PC-3 (cell line): ENCODE measurements at regions of chr19 and their contacts with region 1.

Region 1: DNA sequence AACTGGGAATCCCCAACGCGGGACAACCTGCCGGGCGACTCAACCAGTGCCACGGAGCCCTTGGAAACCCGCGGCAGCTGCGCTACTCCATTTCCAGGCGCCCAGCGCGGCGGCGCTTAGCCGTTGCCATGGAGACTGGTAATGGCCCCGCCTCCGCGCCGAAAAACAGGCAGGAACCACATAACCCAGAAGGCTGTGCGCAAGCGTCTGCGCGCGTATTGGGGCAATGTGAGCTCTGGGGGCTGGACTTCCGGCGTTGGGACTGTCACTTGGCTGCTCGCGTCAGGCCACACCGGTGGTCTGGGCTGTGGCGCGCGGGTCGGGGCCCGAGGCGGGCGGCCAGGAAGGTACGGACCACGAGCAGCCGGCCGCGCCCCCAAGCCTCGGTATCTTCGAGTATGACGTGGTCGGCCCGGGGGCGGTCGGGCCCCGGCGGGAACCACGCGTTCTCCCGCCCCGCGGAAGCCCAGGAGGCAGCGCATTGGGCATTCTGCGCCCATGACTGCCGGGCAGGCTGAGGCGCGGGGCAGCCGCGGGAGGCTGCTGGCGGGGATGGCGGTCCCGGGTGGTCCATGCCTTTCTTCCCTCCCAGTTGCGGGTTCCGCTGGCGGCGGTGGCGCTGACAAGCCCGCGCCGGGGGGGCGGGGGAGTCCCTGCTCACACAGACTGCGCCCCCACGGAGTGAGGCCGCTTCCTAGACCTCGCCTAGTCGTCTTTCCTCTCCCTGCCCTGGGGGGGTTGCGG is at the start of gene ZNF324B:
- DNase-seq: peak; percentile 99
- ATAC-seq: peak; percentile 97
- H3K4me3 ChIP-seq: peak within 1 kb of the TSS; percentile 74
- H3K27ac ChIP-seq: no peak within 1 kb of the TSS
- H3K4me1 ChIP-seq: peaks cover 5% of the 10 kb centered on the region
- H3K27me3 ChIP-seq: no peaks in the 10 kb centered on the region
- CTCF ChIP-seq: no peak
- total RNA-seq, gene ZNF324B: 11.2 and 12.8 TPM in 2 replicates

Region 2: GRCh38 chr19:58408152-58409009 is 43.1 kb before region 1 on chr19 and contains the start of gene ZNF584:
- CTCF ChIA-PET with region 1: no interaction called
- POLR2A ChIA-PET with region 1: no interaction called
- intact Hi-C with region 1: loop called (anchors 1 kb)
- DNase-seq: peak; percentile 96
- ATAC-seq: peak; percentile 94
- H3K4me3 ChIP-seq: peak within 1 kb of the TSS; percentile 78
- H3K27ac ChIP-seq: 0 out of 2 replicates have a peak within 1 kb of the TSS, but pooled peaks have one; percentile 0
- H3K4me1 ChIP-seq: peaks cover 17% of the 10 kb centered on the region
- H3K27me3 ChIP-seq: no peaks in the 10 kb centered on the region
- CTCF ChIP-seq: peak; percentile 53; the same call in 1 of the 2 replicates
- total RNA-seq, gene ZNF584: 49.2 and 73.8 TPM in 2 replicates

Region 3: GRCh38 chr19:58558623-58559274 is 107.2 kb after region 1 on chr19:
- CTCF ChIA-PET with region 1: no interaction called
- POLR2A ChIA-PET with region 1: no interaction called
- intact Hi-C with region 1: no loop called
- DNase-seq: peak; percentile 100
- ATAC-seq: peak; percentile 52
- H3K4me3 ChIP-seq: peak overlapping the region; percentile 69
- H3K27ac ChIP-seq: peak overlapping the region; percentile 85
- H3K4me1 ChIP-seq: peaks cover 57% of the 10 kb centered on the region
- H3K27me3 ChIP-seq: no peaks in the 10 kb centered on the region
- CTCF ChIP-seq: no peak

Region 4: GRCh38 chr19:58572818-58573657 is 121.5 kb after region 1 on chr19 and contains the start of gene MZF1:
- CTCF ChIA-PET with region 1: no interaction called
- POLR2A ChIA-PET with region 1: no interaction called
- intact Hi-C with region 1: no loop called
- DNase-seq: peak; percentile 100
- ATAC-seq: peak; percentile 69
- H3K4me3 ChIP-seq: peak within 1 kb of the TSS; percentile 76
- H3K27ac ChIP-seq: peak within 1 kb of the TSS; percentile 91
- H3K4me1 ChIP-seq: peaks cover 23% of the 10 kb centered on the region
- H3K27me3 ChIP-seq: no peaks in the 10 kb centered on the region
- CTCF ChIP-seq: no peak
- total RNA-seq, gene MZF1: 18.0 and 29.3 TPM in 2 replicates